ENCODE measurements at regions of chr19 and their contacts with region 1.

Region 1: DNA sequence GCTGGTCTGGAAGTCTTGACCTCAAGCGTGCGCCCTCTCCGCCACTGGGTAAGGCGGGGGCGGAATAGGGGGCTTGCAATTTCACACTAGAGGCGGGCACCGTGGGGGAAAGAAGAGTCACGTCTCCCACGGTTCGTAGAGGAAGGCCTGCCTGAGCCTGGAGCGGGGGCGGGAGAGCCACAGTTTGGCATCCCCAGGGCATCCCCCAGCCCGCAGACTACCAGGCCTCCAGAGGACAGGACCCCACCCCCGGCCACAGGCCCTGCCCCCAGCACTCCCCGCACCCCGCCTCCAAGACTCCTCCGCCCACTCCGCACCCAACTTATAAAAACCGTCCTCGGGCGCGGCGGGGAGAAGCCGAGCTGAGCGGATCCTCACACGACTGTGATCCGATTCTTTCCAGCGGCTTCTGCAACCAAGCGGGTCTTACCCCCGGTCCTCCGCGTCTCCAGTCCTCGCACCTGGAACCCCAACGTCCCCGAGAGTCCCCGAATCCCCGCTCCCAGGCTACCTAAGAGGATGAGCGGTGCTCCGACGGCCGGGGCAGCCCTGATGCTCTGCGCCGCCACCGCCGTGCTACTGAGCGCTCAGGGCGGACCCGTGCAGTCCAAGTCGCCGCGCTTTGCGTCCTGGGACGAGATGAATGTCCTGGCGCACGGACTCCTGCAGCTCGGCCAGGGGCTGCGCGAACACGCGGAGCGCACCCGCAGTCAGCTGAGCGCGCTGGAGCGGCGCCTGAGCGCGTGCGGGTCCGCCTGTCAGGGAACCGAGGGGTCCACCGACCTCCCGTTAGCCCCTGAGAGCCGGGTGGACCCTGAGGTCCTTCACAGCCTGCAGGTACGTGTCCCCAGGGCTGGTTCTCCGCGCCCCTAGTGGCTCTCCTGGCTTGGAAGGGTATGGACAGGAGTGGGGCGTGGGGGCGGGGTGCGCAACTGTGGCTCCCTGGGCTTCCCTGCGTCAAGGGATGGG is at the start of gene ANGPTL4:
- DNase-seq: peak; percentile 68
- H3K4me3 ChIP-seq: peak within 1 kb of the TSS; percentile 32 to 51 (median 51)
- H3K27ac ChIP-seq: peak within 1 kb of the TSS; percentile 68
- H3K4me1 ChIP-seq: peaks cover 34% of the 10 kb centered on the region
- H3K27me3 ChIP-seq: no peaks in the 10 kb centered on the region
- CTCF ChIP-seq: peak; percentile 25 to 42
- POLR2A ChIP-seq: peak; percentile 97
- total RNA-seq, gene ANGPTL4: 3.9 and 4.6 TPM in 2 replicates

Region 2: DNA sequence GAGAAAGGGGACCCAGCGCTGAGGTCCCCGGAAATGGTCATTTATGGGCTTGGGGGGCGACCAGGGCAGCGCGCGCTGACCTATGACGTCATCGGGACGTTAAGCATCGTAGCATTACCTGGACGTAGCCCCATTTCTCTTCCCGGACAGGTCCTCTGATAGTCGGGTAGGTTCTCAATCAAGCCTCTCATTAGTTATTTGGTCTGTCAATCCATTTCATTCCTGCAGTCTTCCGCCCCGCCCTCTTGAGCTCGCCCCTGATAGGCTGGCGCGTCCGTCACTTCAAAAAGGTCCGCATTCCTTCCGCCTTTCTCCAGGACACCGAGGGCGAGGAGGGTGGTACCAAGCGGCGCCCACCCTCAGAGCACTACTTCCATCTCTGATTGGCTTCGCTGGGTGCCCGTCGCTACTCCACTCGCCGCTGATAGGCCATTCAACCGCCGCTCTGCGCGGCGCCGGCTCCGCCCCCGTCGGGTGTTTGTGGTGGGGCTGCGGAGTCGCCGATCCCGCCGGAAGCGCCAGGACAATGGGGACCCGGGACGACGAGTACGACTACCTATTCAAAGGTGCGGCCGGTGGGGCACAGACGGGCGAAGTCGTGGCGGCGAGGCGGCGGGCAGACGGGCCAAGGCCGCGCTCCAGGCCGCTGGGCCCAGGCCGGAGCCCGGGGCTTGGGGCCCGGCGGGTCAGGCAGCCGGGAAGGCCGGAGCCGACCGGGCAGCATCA is 26.0 kb after region 1 on chr19 and contains the start of gene RAB11B:
- CTCF ChIA-PET with region 1: interaction called, 18 read pairs
- POLR2A ChIA-PET with region 1: interaction called, 4 read pairs
- dilution Hi-C with region 1: no loop called
- intact Hi-C with region 1: loop called (anchors 1 kb)
- DNase-seq: peak; percentile 100
- H3K4me3 ChIP-seq: peak within 1 kb of the TSS; percentile 62 to 93 (median 69)
- H3K27ac ChIP-seq: peak within 1 kb of the TSS; percentile 97
- H3K4me1 ChIP-seq: peaks cover 23% of the 10 kb centered on the region
- H3K27me3 ChIP-seq: no peaks in the 10 kb centered on the region
- CTCF ChIP-seq: no peak
- POLR2A ChIP-seq: peak; percentile 54
- total RNA-seq, gene RAB11B: 92.2 and 99.8 TPM in 2 replicates

Region 3: GRCh38 chr19:8396563-8397203 is 32.6 kb after region 1 on chr19:
- CTCF ChIA-PET with region 1: interaction called, 18 read pairs
- POLR2A ChIA-PET with region 1: interaction called, 4 read pairs
- dilution Hi-C with region 1: no loop called
- intact Hi-C with region 1: loop called (anchors 1 kb)
- DNase-seq: peak; percentile 74
- H3K4me3 ChIP-seq: no peak overlapping the region
- H3K27ac ChIP-seq: peak overlapping the region; percentile 23
- H3K4me1 ChIP-seq: peaks cover 28% of the 10 kb centered on the region
- H3K27me3 ChIP-seq: no peaks in the 10 kb centered on the region
- CTCF ChIP-seq: peak; percentile 75 to 91
- POLR2A ChIP-seq: no peak

Region 4: DNA sequence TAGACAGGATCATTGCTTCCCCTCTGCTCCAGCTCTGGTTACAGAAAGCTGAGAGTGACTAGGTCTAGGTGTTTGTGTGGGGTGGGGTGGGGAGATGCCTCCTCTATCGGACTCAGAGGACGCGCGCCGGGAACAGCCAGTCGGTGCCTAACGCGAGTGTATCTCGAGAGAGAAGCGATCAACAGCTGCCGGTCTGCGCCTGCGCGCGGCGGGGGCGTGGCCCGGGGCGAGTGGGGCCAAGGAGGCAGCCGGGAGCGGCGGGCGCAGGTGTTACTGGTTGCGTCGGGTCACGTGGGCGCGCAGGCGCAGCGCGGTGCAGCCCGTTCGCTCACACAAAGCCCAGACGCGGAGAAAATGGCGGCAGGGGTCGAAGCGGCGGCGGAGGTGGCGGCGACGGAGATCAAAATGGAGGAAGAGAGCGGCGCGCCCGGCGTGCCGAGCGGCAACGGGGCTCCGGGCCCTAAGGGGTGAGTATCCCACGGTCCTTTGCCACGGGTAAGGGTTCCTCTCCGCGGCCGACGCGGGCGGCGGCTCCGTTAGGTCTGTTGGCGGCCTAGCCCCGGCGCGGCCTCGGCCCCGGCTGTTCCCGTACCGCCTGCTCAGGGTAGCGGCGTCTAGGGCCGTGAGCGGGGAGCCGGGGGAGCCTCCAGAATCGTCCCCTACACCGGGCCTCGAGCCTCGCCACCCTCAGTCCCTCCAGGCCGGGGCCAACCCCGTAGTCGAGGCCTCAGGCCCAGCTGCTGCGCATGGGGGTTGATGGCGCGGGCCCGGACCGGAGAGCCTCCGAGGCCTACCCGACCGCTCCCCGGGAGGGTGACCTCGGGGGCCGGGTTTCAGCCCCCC is 80.8 kb after region 1 on chr19 and contains the start of gene HNRNPM:
- CTCF ChIA-PET with region 1: no interaction called
- POLR2A ChIA-PET with region 1: no interaction called
- dilution Hi-C with region 1: no loop called
- intact Hi-C with region 1: loop called (anchors 2 kb)
- DNase-seq: peak; percentile 99
- H3K4me3 ChIP-seq: peak within 1 kb of the TSS; percentile 81 to 98 (median 84)
- H3K27ac ChIP-seq: peak within 1 kb of the TSS; percentile 93
- H3K4me1 ChIP-seq: peaks cover 25% of the 10 kb centered on the region
- H3K27me3 ChIP-seq: no peaks in the 10 kb centered on the region
- CTCF ChIP-seq: no peak
- POLR2A ChIP-seq: peak; percentile 77
- total RNA-seq, gene HNRNPM: 288 and 301 TPM in 2 replicates